Right ventricle myocardium inferior (tissue), 1 donor: ENCODE measurements at regions of chr7 and their contacts with region 1.

Region 1: DNA sequence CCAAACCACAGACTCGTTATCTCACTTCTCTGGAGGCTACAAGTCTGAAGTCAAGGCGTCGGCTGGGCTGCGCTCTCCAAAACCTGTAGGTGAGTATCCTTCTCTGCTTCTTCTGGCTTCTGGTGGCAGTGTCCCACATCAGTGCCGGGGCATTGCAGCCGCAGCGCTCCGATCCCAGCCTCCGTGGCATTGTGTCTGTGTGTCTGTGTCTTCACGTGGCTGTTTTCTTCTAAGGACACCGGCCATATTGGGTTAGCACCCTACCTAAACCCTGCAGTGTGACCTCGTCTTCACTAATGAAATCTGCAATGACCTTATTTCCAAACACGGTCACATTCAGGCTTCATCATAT is 584.9 kb upstream of the COBL start:
- DNase-seq: no peak
- ATAC-seq: no peak

Region 2: DNA sequence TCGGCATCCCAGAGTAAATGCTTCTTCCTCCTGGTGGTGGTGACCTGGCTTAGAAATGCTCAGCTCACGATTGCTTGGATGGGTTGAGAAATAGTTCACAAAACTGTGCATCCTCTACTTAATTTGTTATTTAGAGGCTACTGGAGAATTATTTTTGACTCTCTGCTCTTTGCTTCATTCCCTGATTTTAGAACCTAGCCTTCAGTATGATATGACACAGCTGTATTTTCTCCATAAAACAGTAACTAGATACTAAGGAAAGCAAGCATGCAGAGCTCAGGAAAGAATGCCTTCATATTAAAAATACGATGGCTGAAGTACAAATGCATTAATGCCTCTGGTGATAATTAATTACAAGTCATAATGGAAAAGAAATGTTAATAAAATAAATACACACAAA is 17.1 kb after region 1 on chr7:
- intact Hi-C with region 1: loop called (anchors 1 kb)
- DNase-seq: no peak
- ATAC-seq: no peak